ENCODE measurements at regions of chr4 and their contacts with region 1.

Region 1: DNA sequence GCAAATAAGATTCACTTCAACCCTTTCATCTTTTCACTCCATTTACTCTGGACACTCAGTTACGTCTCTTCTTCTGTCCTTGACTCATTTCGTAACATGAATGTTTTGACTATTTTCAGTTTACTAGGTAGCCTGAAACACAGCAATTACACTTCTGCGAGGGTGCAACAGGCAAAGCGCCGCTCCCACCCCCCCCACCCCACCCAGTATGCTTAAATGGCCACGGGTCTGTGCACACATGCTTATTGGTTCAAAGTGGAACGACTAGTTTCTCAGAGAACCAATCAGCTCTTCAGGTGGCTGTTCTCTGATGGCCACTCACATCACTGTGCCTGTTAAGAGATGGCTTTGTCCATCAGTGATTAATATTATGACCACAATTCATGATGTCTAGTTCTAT is 3.5 kb downstream of the BEND4 start:
- DNase-seq: no peak
- H3K4me3 ChIP-seq: no peak overlapping the region
- H3K4me3 Mint-ChIP-seq: no peak overlapping the region
- H3K27ac ChIP-seq: no peak overlapping the region
- H3K27ac Mint-ChIP-seq: no peak overlapping the region
- H3K4me1 ChIP-seq: peaks cover 16 to 24% of the 10 kb centered on the region in 2 donors
- H3K4me1 Mint-ChIP-seq: peaks cover 22% of the 10 kb centered on the region
- H3K27me3 ChIP-seq: peaks cover 20 to 39% of the 10 kb centered on the region in 2 donors
- H3K27me3 Mint-ChIP-seq: peaks cover 36 to 48% (median 38%) of the 10 kb centered on the region in 3 donors
- CTCF ChIP-seq: no peak

Region 2: GRCh38 chr4:41600243-41600912 is 548.6 kb before region 1 on chr4:
- intact Hi-C with region 1: loop called in 1 of 2 experiments (anchors 10 kb)
- DNase-seq: no peak
- H3K4me3 ChIP-seq: no peak overlapping the region
- H3K4me3 Mint-ChIP-seq: no peak overlapping the region
- H3K27ac ChIP-seq: no peak overlapping the region
- H3K27ac Mint-ChIP-seq: no peak overlapping the region
- H3K4me1 ChIP-seq: no peaks in the 10 kb centered on the region
- H3K4me1 Mint-ChIP-seq: no peaks in the 10 kb centered on the region
- H3K27me3 ChIP-seq: no peaks in the 10 kb centered on the region
- H3K27me3 Mint-ChIP-seq: peaks cover 0 to 4% (median 3%) of the 10 kb centered on the region in 3 donors
- CTCF ChIP-seq: no peak

Region 3: DNA sequence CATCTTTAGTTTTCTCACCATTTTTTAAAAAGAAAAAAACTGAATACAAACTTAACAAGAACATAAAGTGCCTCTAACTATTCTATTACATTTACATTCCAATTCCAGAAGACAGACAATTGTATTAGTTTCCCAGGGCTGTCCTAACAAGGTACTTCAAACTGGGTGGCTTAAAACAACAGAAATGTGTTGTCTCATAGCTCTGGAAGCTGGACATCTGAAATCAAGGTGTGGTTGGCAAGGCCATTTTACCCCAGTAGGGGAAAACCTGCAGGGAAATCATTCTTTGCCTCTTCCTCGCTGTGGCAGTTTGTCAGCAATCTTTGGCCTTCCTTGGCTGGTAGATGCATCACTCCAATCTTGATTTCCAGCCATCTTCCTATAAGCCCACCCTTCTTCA is 251.3 kb before region 1 on chr4:
- intact Hi-C with region 1: no loop called
- DNase-seq: no peak
- H3K4me3 ChIP-seq: no peak overlapping the region
- H3K4me3 Mint-ChIP-seq: no peak overlapping the region
- H3K27ac ChIP-seq: no peak overlapping the region
- H3K27ac Mint-ChIP-seq: no peak overlapping the region
- H3K4me1 ChIP-seq: no peaks in the 10 kb centered on the region
- H3K4me1 Mint-ChIP-seq: peaks cover 1% of the 10 kb centered on the region
- H3K27me3 ChIP-seq: peaks cover 0 to 6% of the 10 kb centered on the region in 2 donors
- H3K27me3 Mint-ChIP-seq: peaks cover 0 to 5% (median 3%) of the 10 kb centered on the region in 3 donors
- CTCF ChIP-seq: no peak

Region 4: DNA sequence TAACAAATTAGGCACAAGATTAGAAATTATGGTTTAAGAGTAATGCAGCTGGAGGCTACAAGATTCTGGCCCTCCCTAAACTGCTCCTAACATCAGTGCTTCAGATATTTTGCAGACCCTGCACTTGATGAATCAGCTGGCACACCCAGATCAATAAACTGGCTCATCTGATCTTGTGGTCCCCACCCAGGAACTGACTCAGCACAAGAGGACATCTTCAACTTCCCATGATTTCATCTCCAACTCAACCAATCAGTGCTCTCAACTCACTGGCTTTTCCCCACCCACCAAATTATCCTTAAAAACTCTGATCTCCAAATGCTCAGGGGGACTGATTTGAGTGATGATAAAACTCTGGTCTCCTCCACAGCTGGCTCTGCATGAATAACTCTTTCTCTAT is 235.5 kb before region 1 on chr4:
- intact Hi-C with region 1: no loop called
- DNase-seq: no peak
- H3K4me3 ChIP-seq: no peak overlapping the region
- H3K4me3 Mint-ChIP-seq: no peak overlapping the region
- H3K27ac ChIP-seq: no peak overlapping the region
- H3K27ac Mint-ChIP-seq: no peak overlapping the region
- H3K4me1 ChIP-seq: peaks cover 0 to 4% of the 10 kb centered on the region in 2 donors
- H3K4me1 Mint-ChIP-seq: peaks cover 4% of the 10 kb centered on the region
- H3K27me3 ChIP-seq: no peaks in the 10 kb centered on the region
- H3K27me3 Mint-ChIP-seq: peaks cover 0 to 5% (median 0%) of the 10 kb centered on the region in 3 donors
- CTCF ChIP-seq: no peak

Region 5: GRCh38 chr4:42339935-42340406 is 191.0 kb after region 1 on chr4:
- intact Hi-C with region 1: no loop called
- DNase-seq: no peak
- H3K4me3 ChIP-seq: no peak overlapping the region
- H3K4me3 Mint-ChIP-seq: no peak overlapping the region
- H3K27ac ChIP-seq: no peak overlapping the region
- H3K27ac Mint-ChIP-seq: no peak overlapping the region
- H3K4me1 ChIP-seq: no peaks in the 10 kb centered on the region
- H3K4me1 Mint-ChIP-seq: no peaks in the 10 kb centered on the region
- H3K27me3 ChIP-seq: no peaks in the 10 kb centered on the region
- H3K27me3 Mint-ChIP-seq: peaks cover 3 to 13% (median 6%) of the 10 kb centered on the region in 3 donors
- CTCF ChIP-seq: no peak